Gastrocnemius medialis (tissue), 4 donors: ENCODE measurements at regions of chr11 and their contacts with region 1.

Region 1: GRCh38 chr11:60775420-60775961 is 9.6 kb upstream of the MS4A10 start:
- DNase-seq: peak; percentile 64 to 70
- ATAC-seq: peak; percentile 92 to 93
- H3K4me3 ChIP-seq: no peak overlapping the region
- H3K27ac ChIP-seq: peak overlapping the region in 1 of 4 donors; percentile 14
- H3K4me1 ChIP-seq: no peaks in the 10 kb centered on the region
- H3K27me3 ChIP-seq: no peaks in the 10 kb centered on the region
- CTCF ChIP-seq: peak; percentile 63 to 89 (median 75)
- POLR2A ChIP-seq: no peak

Region 2: GRCh38 chr11:60887556-60887955 is 112.1 kb after region 1 on chr11:
- in situ Hi-C with region 1: no loop called
- intact Hi-C with region 1: loop called (anchors 2 kb)
- DNase-seq: no peak
- ATAC-seq: peak; percentile 54 to 86
- H3K4me3 ChIP-seq: no peak overlapping the region
- H3K27ac ChIP-seq: no peak overlapping the region
- H3K4me1 ChIP-seq: no peaks in the 10 kb centered on the region
- H3K27me3 ChIP-seq: no peaks in the 10 kb centered on the region
- CTCF ChIP-seq: peak; percentile 22 to 51 (median 46)
- POLR2A ChIP-seq: no peak